Natural killer cell (primary cell): ENCODE measurements at regions of chr14 and their contacts with region 1.

Region 1: GRCh38 chr14:34982417-34983147 is at the start of gene SRP54:
- DNase-seq: peak; percentile 99 to 100
- ATAC-seq: peak; percentile 89 to 98 (median 89)
- H3K4me3 ChIP-seq: peak within 1 kb of the TSS; percentile 74
- H3K4me3 Mint-ChIP-seq: no peak within 1 kb of the TSS
- H3K27ac ChIP-seq: peak within 1 kb of the TSS; percentile 94
- H3K27ac Mint-ChIP-seq: no peak within 1 kb of the TSS
- H3K4me1 ChIP-seq: peaks cover 20% of the 10 kb centered on the region
- H3K4me1 Mint-ChIP-seq: peaks cover 0 to 6% of the 10 kb centered on the region in 2 donors
- H3K27me3 ChIP-seq: no peaks in the 10 kb centered on the region
- H3K27me3 Mint-ChIP-seq: no peaks in the 10 kb centered on the region
- CTCF ChIP-seq: no peak
- total RNA-seq, gene SRP54: 41.2 to 63.2 (median 48.8) TPM

Region 2: GRCh38 chr14:34539407-34540180 is 443.0 kb before region 1 on chr14 and contains the start of gene EAPP:
- intact Hi-C with region 1: loop called (anchors 10 kb)
- DNase-seq: peak; percentile 92 to 97
- ATAC-seq: peak; percentile 98 to 100 (median 99)
- H3K4me3 ChIP-seq: peak within 1 kb of the TSS; percentile 87
- H3K4me3 Mint-ChIP-seq: peak within 1 kb of the TSS; percentile 99
- H3K27ac ChIP-seq: peak within 1 kb of the TSS; percentile 94
- H3K27ac Mint-ChIP-seq: peak within 1 kb of the TSS; percentile 98 to 100
- H3K4me1 ChIP-seq: peaks cover 18% of the 10 kb centered on the region
- H3K4me1 Mint-ChIP-seq: peaks cover 18 to 20% of the 10 kb centered on the region in 2 donors
- H3K27me3 ChIP-seq: no peaks in the 10 kb centered on the region
- H3K27me3 Mint-ChIP-seq: no peaks in the 10 kb centered on the region
- CTCF ChIP-seq: no peak
- total RNA-seq, gene EAPP: 70.5 to 96.6 (median 76.1) TPM

Region 3: DNA sequence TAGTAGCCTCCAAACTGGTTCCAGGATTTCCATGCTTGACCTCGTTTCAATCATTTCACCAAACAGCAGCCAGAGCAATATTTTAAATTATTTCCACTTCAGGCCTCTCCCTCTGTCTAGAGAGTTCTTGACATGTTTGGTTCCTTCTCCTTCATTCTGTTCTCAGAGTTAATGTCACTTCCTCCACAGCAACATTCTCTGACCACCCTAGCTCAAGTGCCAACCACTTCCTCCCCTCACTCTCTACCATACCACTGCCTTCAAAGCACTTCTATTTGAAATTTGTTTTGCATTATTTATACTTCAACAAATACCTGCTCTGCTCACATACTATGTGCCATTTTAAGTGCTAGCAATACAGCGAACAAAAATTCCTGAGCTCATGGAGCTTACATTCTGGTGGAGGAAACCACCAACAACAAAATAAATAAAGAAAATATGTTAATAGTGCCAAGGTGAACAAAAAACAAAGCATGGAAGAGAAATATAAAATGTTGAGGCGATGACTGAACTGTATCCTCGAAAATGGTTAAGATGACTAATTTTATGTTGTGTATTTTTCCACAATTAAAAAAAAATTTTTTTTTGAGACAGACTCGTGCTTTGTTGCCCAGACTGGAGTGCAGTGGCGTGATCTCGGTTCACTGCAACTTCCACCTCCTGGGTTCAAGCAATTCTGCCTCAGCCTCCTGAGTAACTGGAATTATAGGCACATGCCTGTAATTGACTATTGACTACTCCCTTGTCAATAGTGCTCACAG is 124.7 kb before region 1 on chr14:
- intact Hi-C with region 1: loop called (anchors 2 kb)
- DNase-seq: peak; percentile 27 to 64
- ATAC-seq: peak; percentile 69 to 88 (median 78)
- H3K4me3 ChIP-seq: no peak overlapping the region
- H3K4me3 Mint-ChIP-seq: peak overlapping the region; percentile 87
- H3K27ac ChIP-seq: peak overlapping the region; percentile 80
- H3K27ac Mint-ChIP-seq: peak overlapping the region; percentile 86 to 94
- H3K4me1 ChIP-seq: peaks cover 30% of the 10 kb centered on the region
- H3K4me1 Mint-ChIP-seq: peaks cover 44 to 49% of the 10 kb centered on the region in 2 donors
- H3K27me3 ChIP-seq: no peaks in the 10 kb centered on the region
- H3K27me3 Mint-ChIP-seq: no peaks in the 10 kb centered on the region
- CTCF ChIP-seq: no peak

Region 4: GRCh38 chr14:34911209-34912150 is 71.1 kb before region 1 on chr14:
- intact Hi-C with region 1: no loop called
- DNase-seq: no peak
- ATAC-seq: no peak
- H3K4me3 ChIP-seq: no peak overlapping the region
- H3K4me3 Mint-ChIP-seq: no peak overlapping the region
- H3K27ac ChIP-seq: no peak overlapping the region
- H3K27ac Mint-ChIP-seq: no peak overlapping the region
- H3K4me1 ChIP-seq: no peaks in the 10 kb centered on the region
- H3K4me1 Mint-ChIP-seq: no peaks in the 10 kb centered on the region
- H3K27me3 ChIP-seq: no peaks in the 10 kb centered on the region
- H3K27me3 Mint-ChIP-seq: no peaks in the 10 kb centered on the region
- CTCF ChIP-seq: no peak

Region 5: GRCh38 chr14:35046048-35046741 is 63.6 kb after region 1 on chr14 and contains the start of gene FAM177A1:
- intact Hi-C with region 1: loop called (anchors 1 kb)
- DNase-seq: peak; percentile 94 to 100
- ATAC-seq: peak; percentile 86 to 96 (median 87)
- H3K4me3 ChIP-seq: peak within 1 kb of the TSS; percentile 97
- H3K4me3 Mint-ChIP-seq: peak within 1 kb of the TSS; percentile 97
- H3K27ac ChIP-seq: peak within 1 kb of the TSS; percentile 100
- H3K27ac Mint-ChIP-seq: peak within 1 kb of the TSS; percentile 91 to 93
- H3K4me1 ChIP-seq: peaks cover 11% of the 10 kb centered on the region
- H3K4me1 Mint-ChIP-seq: peaks cover 25 to 31% of the 10 kb centered on the region in 2 donors
- H3K27me3 ChIP-seq: no peaks in the 10 kb centered on the region
- H3K27me3 Mint-ChIP-seq: no peaks in the 10 kb centered on the region
- CTCF ChIP-seq: no peak
- total RNA-seq, gene FAM177A1: 73.8 to 131 (median 79.6) TPM

Region 6: DNA sequence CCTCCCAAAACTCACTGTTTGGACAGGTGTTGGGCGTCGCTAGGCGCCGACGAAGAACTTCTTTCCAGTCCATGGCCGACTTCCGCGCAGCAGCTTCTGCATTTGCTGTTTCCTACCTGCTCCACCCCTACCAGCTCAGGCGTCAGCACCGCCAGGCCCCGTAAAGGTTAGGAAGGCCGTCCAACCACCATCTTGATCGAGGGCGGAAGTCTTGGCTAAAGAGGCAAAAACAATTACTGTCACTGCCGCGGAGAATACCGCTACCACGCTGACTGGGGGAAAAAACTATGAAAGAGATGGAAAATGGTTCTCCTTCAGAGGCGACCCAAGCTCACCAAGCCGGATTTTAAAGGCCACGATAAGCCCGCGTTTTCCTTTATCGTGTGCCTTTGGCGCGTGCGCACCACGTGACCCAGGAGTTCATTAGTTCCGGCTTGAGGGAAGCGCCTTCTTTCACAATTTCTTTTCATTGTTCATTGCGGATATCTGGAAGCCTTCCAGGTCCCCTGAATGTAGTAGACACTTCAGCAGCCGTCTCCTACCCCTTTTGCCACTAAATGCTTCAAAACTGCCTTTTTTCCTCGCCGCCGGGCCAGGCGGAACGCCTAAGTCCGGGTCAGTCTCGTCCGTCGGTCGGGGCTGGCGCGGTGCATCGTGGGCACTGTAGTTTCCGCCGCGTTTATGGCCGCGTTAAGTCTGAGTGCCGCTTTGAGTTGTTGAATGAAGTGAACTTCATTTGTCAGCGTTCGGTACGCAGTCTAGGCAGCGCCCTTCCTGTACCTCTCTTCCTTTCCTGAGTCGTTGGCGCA is 139.5 kb after region 1 on chr14 and contains the starts of genes PPP2R3C and PRORP:
- intact Hi-C with region 1: loop called (anchors 1 kb)
- DNase-seq: peak; percentile 81 to 96
- ATAC-seq: peak; percentile 83 to 94 (median 85)
- H3K4me3 ChIP-seq: peak within 1 kb of the TSS; percentile 72
- H3K4me3 Mint-ChIP-seq: peak within 1 kb of the TSS; percentile 97
- H3K27ac ChIP-seq: peak within 1 kb of the TSS; percentile 96
- H3K27ac Mint-ChIP-seq: peak within 1 kb of the TSS; percentile 99
- H3K4me1 ChIP-seq: peaks cover 33% of the 10 kb centered on the region
- H3K4me1 Mint-ChIP-seq: peaks cover 56 to 60% of the 10 kb centered on the region in 2 donors
- H3K27me3 ChIP-seq: no peaks in the 10 kb centered on the region
- H3K27me3 Mint-ChIP-seq: no peaks in the 10 kb centered on the region
- CTCF ChIP-seq: no peak
- total RNA-seq, gene PPP2R3C: 41.5 to 49.7 (median 48.3) TPM
- total RNA-seq, gene PRORP: 18.3 to 35.8 (median 20.5) TPM

Region 7: DNA sequence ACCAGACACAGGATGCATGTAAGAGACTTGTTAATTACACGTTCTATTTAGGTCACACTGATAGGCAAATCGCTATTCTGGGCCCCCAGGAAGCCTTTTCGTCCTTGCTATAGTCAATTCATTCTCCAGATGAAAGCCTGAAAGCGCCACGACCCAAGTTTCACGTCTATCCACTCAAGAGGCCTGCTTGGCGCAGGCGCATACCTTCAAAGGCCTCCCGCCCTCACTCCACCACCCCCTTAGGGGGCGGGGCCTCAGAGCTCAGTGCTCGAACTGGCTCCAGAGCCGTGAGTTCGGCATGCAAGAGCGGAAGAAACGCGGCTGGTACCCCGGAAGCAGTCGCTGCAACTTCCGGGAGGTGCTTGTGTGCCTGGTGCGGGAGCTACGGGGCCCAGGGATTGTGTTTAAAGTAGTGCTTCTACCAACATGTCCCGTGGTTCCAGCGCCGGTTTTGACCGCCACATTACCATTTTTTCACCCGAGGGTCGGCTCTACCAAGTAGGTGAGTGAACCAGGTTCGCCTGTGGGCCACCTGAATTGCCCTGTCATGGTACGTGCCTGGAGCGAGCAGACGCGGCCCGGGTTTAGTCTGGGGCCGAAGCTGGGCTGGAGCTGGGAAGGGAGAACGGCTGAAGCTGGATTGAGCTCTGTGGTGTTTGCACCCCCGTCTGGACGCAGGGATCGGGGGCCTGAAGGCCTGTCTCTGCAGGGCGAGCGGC is 309.6 kb after region 1 on chr14 and contains the start of gene PSMA6:
- intact Hi-C with region 1: loop called (anchors 1 kb)
- DNase-seq: peak; percentile 96 to 100
- ATAC-seq: peak; percentile 91 to 97 (median 92)
- H3K4me3 ChIP-seq: peak within 1 kb of the TSS; percentile 63
- H3K4me3 Mint-ChIP-seq: peak within 1 kb of the TSS; percentile 97
- H3K27ac ChIP-seq: peak within 1 kb of the TSS; percentile 81
- H3K27ac Mint-ChIP-seq: peak within 1 kb of the TSS; percentile 98 to 99
- H3K4me1 ChIP-seq: peaks cover 31% of the 10 kb centered on the region
- H3K4me1 Mint-ChIP-seq: peaks cover 43 to 45% of the 10 kb centered on the region in 2 donors
- H3K27me3 ChIP-seq: no peaks in the 10 kb centered on the region
- H3K27me3 Mint-ChIP-seq: no peaks in the 10 kb centered on the region
- CTCF ChIP-seq: no peak
- total RNA-seq, gene PSMA6: 130 to 141 (median 139) TPM